ENCODE measurements at regions of chr4 and their contacts with region 1.

Region 1: GRCh38 chr4:88158489-88159243 is at the start of gene ABCG2:
- H3K4me3 Mint-ChIP-seq: peak within 1 kb of the TSS; percentile 83
- H3K27ac Mint-ChIP-seq: peak within 1 kb of the TSS; percentile 69
- H3K4me1 Mint-ChIP-seq: peaks cover 15% of the 10 kb centered on the region
- H3K27me3 Mint-ChIP-seq: peaks cover 26% of the 10 kb centered on the region

Region 2: DNA sequence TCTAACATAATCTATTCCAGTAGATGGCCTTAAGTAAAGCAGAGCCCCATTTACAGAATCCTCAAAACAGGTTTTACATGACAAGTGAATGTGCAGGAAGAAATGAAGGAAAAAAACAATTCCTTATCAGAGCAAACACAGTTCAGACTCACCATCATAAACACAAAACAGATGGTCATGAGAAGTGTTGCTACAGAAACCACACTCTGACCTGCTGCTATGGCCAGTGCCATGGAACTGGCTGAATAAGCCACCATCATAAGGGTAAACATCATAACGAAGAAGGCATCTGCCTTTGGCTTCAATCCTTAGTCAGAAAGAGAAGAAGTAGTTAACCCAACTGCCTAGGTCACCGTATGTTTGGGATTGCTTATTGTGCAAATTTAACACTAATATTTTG is 61.4 kb before region 1 on chr4:
- intact Hi-C with region 1: loop called (anchors 10 kb)
- H3K4me3 Mint-ChIP-seq: no peak overlapping the region
- H3K27ac Mint-ChIP-seq: no peak overlapping the region
- H3K4me1 Mint-ChIP-seq: peaks cover 23% of the 10 kb centered on the region
- H3K27me3 Mint-ChIP-seq: peaks cover 4% of the 10 kb centered on the region

Region 3: GRCh38 chr4:88185906-88186305 is 27.2 kb after region 1 on chr4:
- intact Hi-C with region 1: no loop called
- H3K4me3 Mint-ChIP-seq: no peak overlapping the region
- H3K27ac Mint-ChIP-seq: no peak overlapping the region
- H3K4me1 Mint-ChIP-seq: no peaks in the 10 kb centered on the region
- H3K27me3 Mint-ChIP-seq: no peaks in the 10 kb centered on the region

Measured in dendritic cell treated with granulocyte-macrophage colony-stimulating factor and Interleukin-4, amounts not matched to agents 40 ng/mL and 50 ng/mL, for 4 days (primary cell).